MCF 10A (cell line): ENCODE measurements at regions of chr4 and their contacts with region 1.

Region 1: DNA sequence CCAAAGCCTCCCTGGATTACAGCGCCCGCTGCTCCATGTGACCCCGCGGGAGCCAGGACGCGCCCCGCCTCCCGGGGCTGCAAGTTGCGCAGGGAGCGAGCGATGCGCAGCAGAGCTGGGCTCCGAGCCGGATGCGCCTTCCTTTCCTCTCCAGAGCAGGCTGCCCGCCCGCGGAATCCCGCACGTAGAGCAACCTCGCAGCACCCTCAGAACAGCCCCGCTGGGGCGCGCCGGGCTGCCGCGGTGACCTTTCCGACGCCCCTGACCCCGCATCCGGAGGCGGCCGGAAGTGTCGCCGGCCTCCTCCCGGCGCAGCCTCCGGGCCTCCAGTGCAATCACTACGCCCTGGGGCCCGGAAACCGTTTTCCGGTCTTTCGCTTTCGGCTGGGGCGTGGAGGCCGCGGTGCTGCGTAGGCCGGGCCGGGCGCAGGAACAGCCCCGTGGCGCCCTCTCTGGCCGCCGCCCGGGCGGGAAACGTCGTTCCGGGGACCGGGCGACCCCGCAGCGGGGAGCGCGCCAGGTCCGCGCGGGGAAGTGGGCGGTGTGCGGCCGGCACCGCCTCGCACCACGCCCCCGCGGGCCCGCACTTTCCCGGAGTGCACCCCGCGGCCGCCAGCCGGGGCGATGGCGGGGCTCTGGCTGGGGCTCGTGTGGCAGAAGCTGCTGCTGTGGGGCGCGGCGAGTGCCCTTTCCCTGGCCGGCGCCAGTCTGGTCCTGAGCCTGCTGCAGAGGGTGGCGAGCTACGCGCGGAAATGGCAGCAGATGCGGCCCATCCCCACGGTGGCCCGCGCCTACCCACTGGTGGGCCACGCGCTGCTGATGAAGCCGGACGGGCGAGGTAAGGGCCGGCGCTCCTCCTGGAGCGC is at the start of gene CYP4V2:
- DNase-seq: peak; percentile 71
- H3K4me3 Mint-ChIP-seq: peak within 1 kb of the TSS; percentile 87
- H3K27ac Mint-ChIP-seq: peak within 1 kb of the TSS; percentile 51
- H3K4me1 Mint-ChIP-seq: no peaks in the 10 kb centered on the region
- H3K27me3 Mint-ChIP-seq: no peaks in the 10 kb centered on the region
- CTCF ChIP-seq: peak; percentile 22
- total RNA-seq, gene CYP4V2: 22.1 and 30.2 TPM in 2 replicates

Region 2: DNA sequence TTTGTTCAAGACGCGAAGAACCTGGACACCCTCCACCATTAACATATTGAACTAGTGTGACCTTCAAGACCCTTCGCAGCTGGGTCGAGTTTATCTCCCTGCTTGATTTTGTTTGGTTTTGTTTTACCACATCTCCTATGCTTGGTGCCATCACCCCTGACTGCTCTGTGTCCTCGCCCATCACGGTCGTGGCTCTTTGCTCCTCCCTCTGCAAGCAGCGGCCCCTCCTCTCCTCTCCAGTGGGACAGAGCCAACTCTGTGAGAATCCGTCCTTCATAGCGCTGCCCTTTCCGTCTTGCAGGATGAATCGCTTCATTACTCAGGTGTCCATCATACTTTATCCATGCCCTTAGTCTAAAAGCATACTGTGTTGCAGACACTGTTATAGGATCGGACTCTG is 96.0 kb before region 1 on chr4:
- CTCF ChIA-PET with region 1: no interaction called
- POLR2A ChIA-PET with region 1: no interaction called
- intact Hi-C with region 1: no loop called
- DNase-seq: no peak
- H3K4me3 Mint-ChIP-seq: no peak overlapping the region
- H3K27ac Mint-ChIP-seq: no peak overlapping the region
- H3K4me1 Mint-ChIP-seq: no peaks in the 10 kb centered on the region
- H3K27me3 Mint-ChIP-seq: no peaks in the 10 kb centered on the region
- CTCF ChIP-seq: no peak

Region 3: DNA sequence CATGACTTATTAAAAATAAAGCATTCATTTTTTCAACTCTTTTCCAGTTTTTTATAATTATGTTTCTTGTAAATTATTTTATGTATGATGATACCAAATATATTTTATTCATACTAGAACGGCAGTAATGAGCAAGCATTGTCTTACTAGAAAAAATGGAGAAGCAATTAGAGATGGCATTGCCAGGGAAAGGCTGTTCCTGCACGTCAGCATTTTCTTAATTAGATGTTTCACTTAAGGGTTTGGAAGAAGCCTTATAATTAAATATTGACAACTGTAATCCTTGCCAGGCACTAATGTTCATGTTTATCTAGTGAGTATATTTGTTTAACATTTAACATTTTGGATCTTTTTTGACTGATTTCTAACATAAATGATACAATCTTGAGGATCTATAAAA is 70.4 kb before region 1 on chr4:
- CTCF ChIA-PET with region 1: no interaction called
- POLR2A ChIA-PET with region 1: no interaction called
- intact Hi-C with region 1: no loop called
- DNase-seq: no peak
- H3K4me3 Mint-ChIP-seq: no peak overlapping the region
- H3K27ac Mint-ChIP-seq: no peak overlapping the region
- H3K4me1 Mint-ChIP-seq: no peaks in the 10 kb centered on the region
- H3K27me3 Mint-ChIP-seq: no peaks in the 10 kb centered on the region
- CTCF ChIP-seq: no peak

Region 4: GRCh38 chr4:186201535-186202230 is 10.2 kb after region 1 on chr4:
- CTCF ChIA-PET with region 1: interaction called, 3 read pairs
- POLR2A ChIA-PET with region 1: interaction called, 11 read pairs
- intact Hi-C with region 1: no loop called
- DNase-seq: peak; percentile 33
- H3K4me3 Mint-ChIP-seq: no peak overlapping the region
- H3K27ac Mint-ChIP-seq: no peak overlapping the region
- H3K4me1 Mint-ChIP-seq: no peaks in the 10 kb centered on the region
- H3K27me3 Mint-ChIP-seq: no peaks in the 10 kb centered on the region
- CTCF ChIP-seq: peak; percentile 16